Lower lobe of right lung (tissue), 2 donors: ENCODE measurements at regions of chr4 and their contacts with region 1.

Region 1: GRCh38 chr4:123396307-123397143 is at the start of gene SPRY1:
- DNase-seq: peak; percentile 88
- ATAC-seq: peak; percentile 79 to 82
- H3K4me3 ChIP-seq: peak within 1 kb of the TSS; percentile 75
- H3K27ac ChIP-seq: peak within 1 kb of the TSS; percentile 93
- H3K4me1 ChIP-seq: no peaks in the 10 kb centered on the region
- H3K27me3 ChIP-seq: no peaks in the 10 kb centered on the region
- CTCF ChIP-seq: no peak
- total RNA-seq, gene SPRY1: 86.6 TPM

Region 2: DNA sequence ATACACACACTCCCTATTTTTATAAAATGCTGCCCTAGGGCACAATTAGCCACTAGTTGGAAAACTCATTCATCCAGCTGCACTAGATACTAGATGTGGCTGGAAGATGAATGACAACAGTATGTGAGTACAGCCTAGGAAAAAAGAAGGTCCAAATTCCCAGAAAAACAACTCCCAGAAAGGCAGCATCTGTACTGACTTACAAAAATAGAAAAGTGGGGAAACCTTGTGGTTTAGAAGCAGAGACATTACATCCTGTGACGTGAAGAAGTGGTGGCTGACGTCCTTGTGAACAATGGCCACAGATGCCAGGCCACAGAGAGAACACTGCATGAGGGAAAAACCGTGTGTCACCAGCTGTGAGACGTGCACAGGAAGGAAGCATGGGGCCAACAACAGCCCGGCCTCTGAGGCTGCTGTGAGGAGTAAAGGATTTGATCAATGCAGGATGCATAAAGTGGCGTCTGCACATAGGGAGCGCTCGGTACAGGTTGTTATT is 81.2 kb after region 1 on chr4:
- intact Hi-C with region 1: no loop called
- DNase-seq: no peak
- ATAC-seq: peak; percentile 33 to 58
- H3K4me3 ChIP-seq: no peak overlapping the region
- H3K27ac ChIP-seq: peak overlapping the region; percentile 75
- H3K4me1 ChIP-seq: peaks cover 15% of the 10 kb centered on the region
- H3K27me3 ChIP-seq: no peaks in the 10 kb centered on the region
- CTCF ChIP-seq: no peak

Region 3: DNA sequence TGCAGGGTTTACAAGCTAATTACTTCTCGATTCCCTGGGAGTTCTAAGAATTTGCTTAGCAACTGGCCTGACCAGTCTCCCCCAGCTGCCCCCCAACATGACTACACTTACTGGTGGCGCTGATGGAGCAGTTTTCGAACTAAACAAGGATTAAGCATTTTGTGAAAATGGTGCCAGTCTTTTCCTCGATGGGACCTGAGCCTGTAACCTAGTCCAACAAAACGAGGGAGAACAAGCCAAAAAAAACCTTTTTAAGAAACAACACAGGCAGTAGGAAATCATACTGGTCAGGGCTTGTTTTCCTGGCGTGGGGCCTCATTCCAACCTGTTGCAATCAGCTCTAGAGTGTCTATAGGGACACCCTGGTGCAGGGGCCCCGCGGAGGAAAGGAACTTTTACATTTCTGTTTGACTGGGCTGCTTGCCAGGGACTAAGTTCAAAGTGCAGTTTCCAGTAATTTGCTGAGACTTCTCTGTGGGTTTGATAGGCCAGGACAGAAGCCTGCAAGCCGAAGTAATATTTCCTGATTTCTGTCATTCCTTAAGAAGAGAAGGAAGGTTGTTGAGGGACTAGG is 158.8 kb after region 1 on chr4:
- intact Hi-C with region 1: no loop called
- DNase-seq: peak; percentile 88
- ATAC-seq: peak; percentile 90 to 95
- H3K4me3 ChIP-seq: no peak overlapping the region
- H3K27ac ChIP-seq: peak overlapping the region; percentile 78
- H3K4me1 ChIP-seq: peaks cover 30% of the 10 kb centered on the region
- H3K27me3 ChIP-seq: no peaks in the 10 kb centered on the region
- CTCF ChIP-seq: no peak

Region 4: GRCh38 chr4:123580981-123581664 is 184.6 kb after region 1 on chr4:
- intact Hi-C with region 1: no loop called
- DNase-seq: no peak
- ATAC-seq: no peak
- H3K4me3 ChIP-seq: no peak overlapping the region
- H3K27ac ChIP-seq: no peak overlapping the region
- H3K4me1 ChIP-seq: no peaks in the 10 kb centered on the region
- H3K27me3 ChIP-seq: no peaks in the 10 kb centered on the region
- CTCF ChIP-seq: no peak

Region 5: GRCh38 chr4:123661080-123661737 is 264.7 kb after region 1 on chr4:
- intact Hi-C with region 1: loop called (anchors 10 kb)
- DNase-seq: no peak
- ATAC-seq: peak in 1 of 2 donors; percentile 37
- H3K4me3 ChIP-seq: no peak overlapping the region
- H3K27ac ChIP-seq: no peak overlapping the region
- H3K4me1 ChIP-seq: peaks cover 8% of the 10 kb centered on the region
- H3K27me3 ChIP-seq: no peaks in the 10 kb centered on the region
- CTCF ChIP-seq: peak; percentile 54